SK-N-SH (cell line): ENCODE measurements at regions of chr3 and their contacts with region 1.

Region 1: GRCh38 chr3:40329071-40329470 is 19.6 kb downstream of the EIF1B start:
- DNase-seq: no peak
- H3K4me3 ChIP-seq: no peak overlapping the region
- H3K27ac ChIP-seq: no peak overlapping the region
- H3K4me1 ChIP-seq: peaks cover 0 to 23% of the 10 kb centered on the region in 2 experiments; a peak in 2 of 4 replicates
- H3K27me3 ChIP-seq: no peaks in the 10 kb centered on the region
- CTCF ChIP-seq: no peak
- EP300 ChIP-seq: no peak
- RAD21 ChIP-seq: no peak

Region 2: GRCh38 chr3:40317061-40317855 is 11.8 kb before region 1 on chr3:
- CTCF ChIA-PET with region 1: interaction called, 26 read pairs
- POLR2A ChIA-PET with region 1: no interaction called
- DNase-seq: peak; percentile 65
- H3K4me3 ChIP-seq: no peak overlapping the region; a peak in 1 of 4 replicates
- H3K27ac ChIP-seq: no peak overlapping the region
- H3K4me1 ChIP-seq: peaks cover 0 to 10% of the 10 kb centered on the region in 2 experiments; a peak in 2 of 4 replicates
- H3K27me3 ChIP-seq: no peaks in the 10 kb centered on the region
- CTCF ChIP-seq: peak; percentile 90
- EP300 ChIP-seq: no peak
- RAD21 ChIP-seq: peak; percentile 93

Region 3: DNA sequence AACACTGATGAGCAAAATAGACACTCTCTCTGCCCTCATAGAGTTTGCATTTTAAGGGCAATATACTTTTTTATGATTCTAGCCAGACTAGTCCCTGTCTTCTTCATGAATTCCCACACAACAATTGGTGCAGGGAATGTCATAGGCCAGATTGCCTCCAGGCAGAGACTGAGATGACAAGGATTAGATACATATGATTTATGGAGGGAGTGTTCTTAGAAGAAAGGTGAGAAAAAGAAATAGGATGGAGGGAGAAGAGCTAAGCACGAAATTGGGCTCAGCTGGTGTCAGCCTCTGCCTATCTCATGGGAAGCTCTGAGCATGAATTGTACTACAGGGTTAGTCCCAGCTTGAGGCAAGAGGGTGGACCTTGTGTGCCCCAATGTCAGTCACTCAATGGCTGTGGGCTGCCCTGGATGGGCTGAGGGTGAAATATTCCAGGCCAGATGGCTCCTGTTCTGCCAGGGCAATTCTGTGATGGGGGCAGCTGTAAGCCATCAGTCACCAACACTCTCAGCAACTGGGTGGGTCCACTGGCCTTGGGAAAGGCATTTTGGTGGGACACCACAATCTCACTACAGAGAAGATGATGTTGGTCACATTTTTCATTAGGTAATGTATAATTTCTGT is 11.6 kb after region 1 on chr3:
- CTCF ChIA-PET with region 1: interaction called, 14 read pairs
- POLR2A ChIA-PET with region 1: no interaction called
- DNase-seq: peak; percentile 22
- H3K4me3 ChIP-seq: no peak overlapping the region
- H3K27ac ChIP-seq: peak overlapping the region in 1 of 2 experiments; percentile 41; a peak in 2 of 4 replicates
- H3K4me1 ChIP-seq: peaks cover 0 to 15% of the 10 kb centered on the region in 2 experiments; a peak in 2 of 4 replicates
- H3K27me3 ChIP-seq: no peaks in the 10 kb centered on the region; the same call in 1 of the 2 replicates
- CTCF ChIP-seq: no peak
- EP300 ChIP-seq: 0 out of 4 replicates have a peak, but pooled peaks of 1 of the 2 experiments have one; percentile 9
- RAD21 ChIP-seq: no peak

Region 4: DNA sequence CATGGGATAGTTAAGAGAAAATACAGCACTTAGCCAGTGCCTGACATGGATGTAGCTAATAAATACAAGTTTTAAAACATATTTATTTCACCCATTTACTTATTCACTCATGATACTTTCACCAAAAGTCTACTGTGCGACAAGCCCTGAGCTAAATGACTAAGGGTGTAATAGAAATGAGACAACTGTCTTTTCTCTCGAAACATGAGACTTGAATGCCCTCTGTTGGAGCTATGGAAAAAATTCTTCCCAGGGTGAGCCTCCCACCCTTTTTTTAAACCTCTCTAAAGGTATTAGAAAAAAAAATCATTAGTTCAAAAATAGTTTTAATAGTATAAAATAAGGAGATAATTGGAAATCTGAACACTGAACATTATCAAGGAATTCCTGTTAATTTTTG is 103.7 kb after region 1 on chr3:
- CTCF ChIA-PET with region 1: interaction called, 11 read pairs
- POLR2A ChIA-PET with region 1: no interaction called
- DNase-seq: peak; percentile 20
- H3K4me3 ChIP-seq: no peak overlapping the region
- H3K27ac ChIP-seq: no peak overlapping the region
- H3K4me1 ChIP-seq: no peaks in the 10 kb centered on the region; a peak in 1 of 4 replicates
- H3K27me3 ChIP-seq: no peaks in the 10 kb centered on the region
- CTCF ChIP-seq: no peak
- EP300 ChIP-seq: no peak
- RAD21 ChIP-seq: peak; percentile 64